ENCODE measurements at regions of chr19 and their contacts with region 1.

Region 1: DNA sequence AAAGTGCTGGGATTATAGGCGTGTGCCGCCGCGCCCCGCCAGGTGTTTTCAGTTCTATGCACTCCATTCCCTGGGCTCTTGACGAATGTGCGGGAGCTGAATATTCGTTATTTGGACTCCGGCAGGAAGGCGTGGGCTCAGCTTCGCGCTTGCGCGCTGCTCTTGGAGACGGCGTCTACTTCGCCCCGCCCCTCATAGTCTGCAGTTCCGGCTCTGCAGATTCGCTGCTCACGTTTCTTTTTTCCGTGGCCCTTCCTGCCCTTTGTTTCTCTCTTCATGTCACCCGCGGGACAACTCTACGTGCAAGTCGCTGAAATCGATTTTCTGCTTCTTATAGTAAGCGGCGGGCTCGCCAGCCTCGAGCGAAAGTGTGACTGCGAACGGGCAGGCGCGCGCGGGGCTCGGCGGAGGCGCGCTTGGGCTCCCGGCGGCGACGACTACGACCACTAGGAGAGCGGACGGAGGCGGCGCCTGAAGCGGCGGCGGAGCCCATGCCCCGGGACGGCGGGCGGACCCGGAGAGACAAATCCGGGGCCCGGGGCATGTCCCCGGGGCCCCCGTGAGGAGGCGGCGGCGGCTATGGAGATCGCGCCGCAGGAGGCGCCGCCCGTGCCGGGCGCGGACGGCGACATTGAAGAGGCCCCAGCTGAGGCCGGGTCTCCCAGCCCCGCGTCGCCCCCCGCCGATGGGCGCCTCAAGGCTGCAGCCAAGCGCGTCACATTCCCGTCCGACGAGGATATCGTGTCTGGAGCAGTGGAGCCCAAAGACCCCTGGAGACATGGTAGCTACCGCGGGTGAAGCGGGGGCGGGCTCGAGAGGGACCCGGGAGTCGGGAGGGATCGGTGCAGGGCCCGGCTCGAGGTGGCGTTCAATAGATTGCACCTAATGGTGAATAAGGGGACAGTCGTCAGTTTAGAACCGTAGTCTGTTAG is at the start of gene PPP1R37:
- DNase-seq: peak; percentile 89 to 97 (median 92)
- ATAC-seq: peak; percentile 89
- H3K4me3 ChIP-seq: peak within 1 kb of the TSS; percentile 99
- H3K27ac ChIP-seq: peak within 1 kb of the TSS; percentile 100
- H3K4me1 ChIP-seq: peaks cover 32 to 64% of the 10 kb centered on the region in 2 experiments
- H3K27me3 ChIP-seq: no peaks in the 10 kb centered on the region
- CTCF ChIP-seq: peak in 1 of 3 experiments; percentile 11; a peak in 4 of 6 replicates
- EP300 ChIP-seq: peak; percentile 99
- POLR2A ChIP-seq: peak; percentile 64
- RAD21 ChIP-seq: peak in 1 of 2 experiments; percentile 2; a peak in 2 of 4 replicates
- polyA plus RNA-seq, gene PPP1R37: 0.04 to 0.10 TPM

Region 2: DNA sequence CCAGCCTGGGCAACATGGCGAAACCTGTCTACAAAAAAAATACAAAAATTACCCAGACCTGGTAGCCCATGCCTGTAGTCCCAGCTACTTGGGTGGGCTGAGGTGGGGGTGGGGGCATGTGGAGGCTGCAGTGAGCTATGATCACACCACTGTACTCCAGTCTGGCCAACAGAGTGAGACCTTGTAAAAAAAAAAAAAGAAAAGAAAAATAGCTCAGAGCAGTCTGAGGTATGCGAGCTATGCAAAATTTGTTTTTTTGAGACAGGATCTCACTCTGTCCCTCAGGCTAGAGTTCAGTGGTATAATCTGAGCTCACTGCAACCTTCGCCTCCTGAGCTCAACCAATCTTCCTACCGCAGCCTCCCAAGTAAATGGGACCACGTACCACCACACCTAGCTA is 209.1 kb before region 1 on chr19:
- CTCF ChIA-PET with region 1: no interaction called
- POLR2A ChIA-PET with region 1: no interaction called
- in situ Hi-C with region 1: no loop called
- intact Hi-C with region 1: no loop called
- DNase-seq: no peak
- ATAC-seq: no peak
- H3K4me3 ChIP-seq: no peak overlapping the region
- H3K27ac ChIP-seq: no peak overlapping the region
- H3K4me1 ChIP-seq: peaks cover 0 to 17% of the 10 kb centered on the region in 2 experiments; a peak in 2 of 5 replicates
- H3K27me3 ChIP-seq: no peaks in the 10 kb centered on the region
- CTCF ChIP-seq: no peak
- EP300 ChIP-seq: no peak
- POLR2A ChIP-seq: no peak
- RAD21 ChIP-seq: no peak

Region 3: DNA sequence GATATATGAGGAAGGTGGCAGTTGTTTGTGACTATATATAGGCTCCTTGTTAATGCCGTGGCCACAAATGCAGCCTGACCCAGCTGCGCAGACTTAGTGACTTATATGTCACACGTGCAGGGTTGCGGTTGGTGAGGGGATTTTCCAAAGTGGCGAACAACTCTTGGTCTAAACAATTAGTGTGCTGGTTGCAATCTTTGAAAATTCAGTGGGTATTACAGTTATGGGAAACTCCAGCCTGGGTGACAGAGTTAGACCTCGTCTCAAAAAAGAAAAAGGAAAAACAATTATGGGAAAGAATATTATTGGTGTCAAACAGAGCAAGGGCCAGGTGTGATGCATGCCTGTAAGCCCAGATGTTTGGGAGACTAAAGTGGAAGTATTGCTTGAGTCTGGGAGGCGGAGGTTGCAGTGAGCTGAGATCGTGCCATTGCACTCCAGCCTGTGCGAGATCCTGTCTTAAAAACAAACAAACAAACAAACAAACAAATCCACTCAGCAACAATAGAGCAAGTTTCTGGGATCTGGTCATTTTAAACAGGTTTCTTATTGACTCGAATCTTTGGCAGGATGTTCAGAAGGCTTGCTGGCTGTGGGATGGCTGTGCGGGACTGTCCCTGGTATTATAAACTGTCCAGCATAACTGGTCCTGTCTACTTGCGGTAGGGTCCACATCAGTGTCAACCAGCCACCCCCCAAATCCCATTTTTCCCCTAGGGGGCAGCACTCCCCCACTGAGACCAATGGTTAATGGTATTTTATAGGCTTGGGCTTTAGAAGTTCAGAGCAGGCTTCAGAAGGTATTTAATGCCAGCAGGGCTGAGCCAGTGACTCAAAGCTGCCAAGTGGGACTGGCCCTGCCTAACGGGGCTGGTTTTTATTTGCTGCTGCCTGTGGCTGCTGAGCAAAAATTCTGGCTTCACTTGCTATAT is 76.4 kb before region 1 on chr19:
- CTCF ChIA-PET with region 1: no interaction called
- POLR2A ChIA-PET with region 1: no interaction called
- in situ Hi-C with region 1: no loop called
- intact Hi-C with region 1: no loop called
- DNase-seq: peak; percentile 71 to 86 (median 78)
- ATAC-seq: peak; percentile 98
- H3K4me3 ChIP-seq: no peak overlapping the region
- H3K27ac ChIP-seq: no peak overlapping the region
- H3K4me1 ChIP-seq: peaks cover 0 to 1% of the 10 kb centered on the region in 2 experiments; a peak in 2 of 5 replicates
- H3K27me3 ChIP-seq: no peaks in the 10 kb centered on the region
- CTCF ChIP-seq: peak; percentile 85 to 89 (median 87)
- EP300 ChIP-seq: no peak
- POLR2A ChIP-seq: no peak
- RAD21 ChIP-seq: peak; percentile 65 to 85

Region 4: DNA sequence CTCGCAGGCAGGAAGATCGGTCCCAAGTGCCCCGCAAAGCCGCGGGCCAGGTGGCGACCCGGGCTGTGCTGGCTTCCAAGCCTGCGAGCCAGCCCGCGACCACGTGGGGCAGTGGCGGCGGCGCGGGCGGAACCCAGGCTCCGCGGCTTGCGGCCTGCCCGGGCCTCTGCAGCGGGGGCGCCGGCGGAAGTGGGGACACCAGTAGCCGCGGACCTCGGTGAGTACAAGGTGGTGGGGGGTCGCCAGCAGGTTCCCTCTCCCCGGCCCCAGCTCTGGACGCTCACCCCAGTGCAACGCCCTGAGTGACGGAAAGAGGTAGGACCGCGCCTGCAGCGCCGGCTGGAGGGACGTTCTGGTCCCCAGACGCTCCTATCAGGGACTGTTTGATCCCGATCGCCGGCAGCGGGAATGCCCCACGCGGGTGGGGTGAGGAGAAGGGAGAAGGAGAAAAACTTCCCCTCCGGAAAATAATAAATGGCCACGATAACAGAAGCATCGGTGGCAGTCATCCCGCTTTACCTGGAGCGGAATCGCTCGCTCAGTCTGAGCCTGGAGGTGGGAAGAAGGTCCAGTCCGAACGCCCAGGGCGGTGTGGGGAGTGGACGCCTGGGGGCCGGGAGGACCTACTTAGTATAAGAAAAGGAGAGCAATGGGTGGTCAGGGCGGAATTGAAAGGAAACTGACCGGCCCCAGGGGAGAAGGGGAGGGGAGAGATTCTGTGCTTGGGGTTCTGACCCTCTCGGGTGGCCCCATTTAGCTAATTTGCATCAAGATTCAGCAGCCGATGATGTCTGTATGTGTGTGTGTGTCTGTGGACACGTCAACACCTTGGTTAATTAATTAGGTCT is 13.7 kb before region 1 on chr19 and contains the start of gene GEMIN7:
- CTCF ChIA-PET with region 1: no interaction called
- POLR2A ChIA-PET with region 1: interaction called, 11 read pairs
- in situ Hi-C with region 1: no loop called
- intact Hi-C with region 1: no loop called
- DNase-seq: peak; percentile 85 to 89 (median 88)
- ATAC-seq: peak; percentile 70
- H3K4me3 ChIP-seq: peak within 1 kb of the TSS; percentile 92
- H3K27ac ChIP-seq: peak within 1 kb of the TSS; percentile 90
- H3K4me1 ChIP-seq: peaks cover 25 to 52% of the 10 kb centered on the region in 2 experiments
- H3K27me3 ChIP-seq: no peaks in the 10 kb centered on the region
- CTCF ChIP-seq: peak; percentile 11 to 56 (median 40); a peak in 4 of 6 replicates
- EP300 ChIP-seq: no peak
- POLR2A ChIP-seq: peak; percentile 83
- RAD21 ChIP-seq: 0 out of 4 replicates have a peak, but pooled peaks of 1 of the 2 experiments have one; percentile 15
- polyA plus RNA-seq, gene GEMIN7: 84.9 to 124 TPM

Region 5: DNA sequence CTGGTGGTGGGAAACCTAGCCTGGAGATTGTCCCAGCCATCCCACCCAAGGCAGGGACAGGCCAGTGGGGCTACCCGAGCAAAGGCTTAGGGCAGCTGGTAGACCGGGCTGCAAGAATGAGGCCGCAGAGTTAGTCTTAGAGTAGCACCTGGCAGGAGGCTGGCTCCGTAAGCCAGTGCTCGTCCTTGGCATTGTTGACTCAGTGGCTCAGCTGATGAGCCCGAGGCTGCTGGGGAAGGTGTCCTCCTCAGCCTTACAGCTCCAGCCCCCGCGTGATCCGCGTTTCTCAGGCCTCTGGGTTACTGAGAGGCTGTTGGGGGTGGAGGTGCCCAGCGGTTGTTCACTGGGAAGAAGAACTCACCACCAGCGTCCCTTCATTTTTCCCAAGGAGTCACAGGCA is 24.7 kb after region 1 on chr19:
- CTCF ChIA-PET with region 1: no interaction called
- POLR2A ChIA-PET with region 1: interaction called, 14 read pairs
- in situ Hi-C with region 1: no loop called
- intact Hi-C with region 1: no loop called
- DNase-seq: no peak
- ATAC-seq: no peak
- H3K4me3 ChIP-seq: no peak overlapping the region
- H3K27ac ChIP-seq: no peak overlapping the region
- H3K4me1 ChIP-seq: peaks cover 4 to 37% of the 10 kb centered on the region in 2 experiments; a peak in 4 of 5 replicates
- H3K27me3 ChIP-seq: no peaks in the 10 kb centered on the region
- CTCF ChIP-seq: no peak
- EP300 ChIP-seq: no peak
- POLR2A ChIP-seq: no peak
- RAD21 ChIP-seq: no peak

Region 6: DNA sequence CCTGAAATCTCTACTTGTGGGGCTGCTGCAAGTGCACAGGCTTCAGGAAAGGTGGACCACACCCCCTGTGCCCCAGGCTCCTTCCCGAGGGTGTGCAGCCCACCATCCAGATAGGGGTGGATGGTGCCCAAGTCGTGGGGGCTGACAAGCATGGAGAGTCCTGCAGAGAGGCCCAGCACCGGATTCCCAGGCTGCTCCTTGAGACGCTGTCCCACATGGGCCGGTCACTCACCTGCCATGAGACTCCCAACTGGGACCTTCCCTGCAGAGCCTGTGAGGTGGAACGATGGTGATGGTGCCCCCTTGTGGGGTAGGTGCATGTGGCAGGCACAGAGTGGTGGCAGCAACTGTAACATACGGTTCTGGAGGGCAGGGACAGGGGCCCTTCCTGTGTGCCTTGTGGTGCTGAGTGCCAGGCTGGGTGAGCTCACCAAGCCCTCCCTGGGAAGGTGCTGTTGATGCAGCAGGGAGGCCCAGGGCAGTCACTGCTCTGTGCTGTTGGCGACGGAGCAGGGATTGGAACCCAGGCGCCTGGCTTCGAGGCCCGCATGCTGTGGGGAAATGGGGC is 33.0 kb after region 1 on chr19:
- CTCF ChIA-PET with region 1: no interaction called
- POLR2A ChIA-PET with region 1: interaction called, 5 read pairs
- in situ Hi-C with region 1: no loop called
- intact Hi-C with region 1: loop called (anchors 1 kb)
- DNase-seq: peak; percentile 66 to 82 (median 71)
- ATAC-seq: peak; percentile 98
- H3K4me3 ChIP-seq: no peak overlapping the region
- H3K27ac ChIP-seq: peak overlapping the region; percentile 30; the same call in 2 of the 3 replicates
- H3K4me1 ChIP-seq: peaks cover 10 to 26% of the 10 kb centered on the region in 2 experiments
- H3K27me3 ChIP-seq: no peaks in the 10 kb centered on the region
- CTCF ChIP-seq: peak; percentile 82 to 90 (median 83)
- EP300 ChIP-seq: no peak
- POLR2A ChIP-seq: no peak
- RAD21 ChIP-seq: peak; percentile 58 to 84

Measured in K562 (cell line).